Activated CD4-positive, alpha-beta memory T cell treated with anti-CD3 and anti-CD28 coated beads for 36 hours (primary cell): ENCODE measurements at regions of chrX and their contacts with region 1.

Region 1: DNA sequence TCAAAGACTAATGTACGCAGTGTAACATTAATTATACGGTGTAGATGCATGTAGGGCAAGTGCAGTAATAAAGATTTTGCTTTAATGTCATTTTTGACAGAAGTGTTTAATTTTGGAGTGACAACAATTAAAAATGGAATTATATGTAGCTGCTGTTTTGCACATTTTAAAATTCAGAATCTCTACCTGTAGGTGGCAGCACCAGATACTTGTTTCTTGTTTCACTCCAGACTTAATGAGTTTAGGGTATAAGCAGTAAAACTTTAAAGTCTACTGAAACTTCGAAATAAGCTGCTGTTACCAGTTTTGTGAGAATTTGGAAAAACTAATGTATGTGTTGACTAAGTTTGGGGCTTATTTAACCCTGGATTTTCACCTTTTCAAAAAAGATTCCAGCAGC is 144.9 kb downstream of the POLA1 start:
- DNase-seq: no peak
- H3K4me3 Mint-ChIP-seq: no peak overlapping the region
- H3K27ac Mint-ChIP-seq: no peak overlapping the region
- H3K4me1 Mint-ChIP-seq: no peaks in the 10 kb centered on the region
- H3K27me3 Mint-ChIP-seq: no peaks in the 10 kb centered on the region

Region 2: GRCh38 chrX:25015486-25016360 is 177.1 kb after region 1 on chrX and contains the start of gene ARX:
- CTCF ChIA-PET with region 1: interaction called, 15 read pairs
- POLR2A ChIA-PET with region 1: no interaction called
- intact Hi-C with region 1: loop called (anchors 5 kb)
- DNase-seq: peak; percentile 60
- H3K4me3 Mint-ChIP-seq: no peak within 1 kb of the TSS
- H3K27ac Mint-ChIP-seq: no peak within 1 kb of the TSS
- H3K4me1 Mint-ChIP-seq: peaks cover 12% of the 10 kb centered on the region
- H3K27me3 Mint-ChIP-seq: peaks cover 37% of the 10 kb centered on the region
- total RNA-seq, gene ARX: not detected

Region 3: DNA sequence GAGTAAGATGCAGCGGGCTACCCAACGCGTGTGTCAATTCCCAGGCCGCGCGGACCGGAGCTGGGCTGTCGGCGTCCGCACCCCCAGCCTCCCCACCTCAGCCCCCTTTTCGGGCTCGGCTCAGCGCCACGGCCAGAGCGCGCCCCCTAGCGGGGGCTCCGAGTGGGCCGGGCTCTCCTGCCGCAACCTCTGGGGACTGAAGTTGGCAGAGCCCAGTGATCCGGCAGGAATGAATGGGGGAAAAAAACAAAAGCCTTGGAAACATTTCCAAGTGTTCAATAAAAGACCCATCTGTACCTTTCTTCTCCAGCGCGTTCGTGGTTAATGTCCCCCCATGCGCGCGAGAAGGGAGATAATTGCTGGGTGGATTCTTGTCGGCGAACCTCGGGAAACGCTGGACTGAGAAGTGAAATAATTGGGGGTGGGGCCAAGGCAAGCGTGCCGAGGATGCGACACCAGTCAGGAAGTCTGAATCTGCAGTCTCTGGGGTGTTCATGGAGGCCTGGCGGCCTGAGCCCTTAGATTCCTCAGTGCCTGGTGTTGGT is 182.3 kb after region 1 on chrX:
- CTCF ChIA-PET with region 1: interaction called, 15 read pairs
- POLR2A ChIA-PET with region 1: no interaction called
- intact Hi-C with region 1: loop called (anchors 5 kb)
- DNase-seq: peak; percentile 42
- H3K4me3 Mint-ChIP-seq: no peak overlapping the region
- H3K27ac Mint-ChIP-seq: no peak overlapping the region
- H3K4me1 Mint-ChIP-seq: peaks cover 27% of the 10 kb centered on the region
- H3K27me3 Mint-ChIP-seq: peaks cover 58% of the 10 kb centered on the region